ENCODE measurements at regions of chr21 and their contacts with region 1.

Region 1: DNA sequence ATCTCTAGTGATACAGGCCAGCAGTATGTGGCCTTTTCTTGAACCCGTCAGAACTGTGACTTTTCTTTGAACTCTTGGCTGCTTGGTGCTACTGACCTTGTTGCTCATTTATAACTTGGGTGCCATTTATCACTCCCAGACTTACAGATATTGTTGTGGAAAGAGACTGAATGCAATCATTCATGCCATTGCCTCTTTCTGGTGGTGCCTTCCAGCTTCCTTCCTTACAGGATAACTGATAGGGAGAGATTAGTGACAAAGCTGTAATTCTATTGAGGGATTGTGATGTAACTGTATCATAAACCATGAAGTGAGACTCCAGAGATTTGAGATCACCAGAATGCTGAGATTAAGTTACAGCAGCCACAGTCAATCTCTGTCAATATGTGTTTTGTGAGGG is 256.5 kb downstream of the USP25 start:
- DNase-seq: no peak

Region 2: GRCh38 chr21:15953551-15954116 is 32.6 kb before region 1 on chr21:
- intact Hi-C with region 1: loop called in 1 of 2 experiments (anchors 2 kb)
- DNase-seq: no peak

Region 3: GRCh38 chr21:16124378-16125130 is 138.3 kb after region 1 on chr21:
- intact Hi-C with region 1: no loop called
- DNase-seq: no peak

Region 4: GRCh38 chr21:16323596-16323995 is 337.3 kb after region 1 on chr21:
- intact Hi-C with region 1: no loop called
- DNase-seq: no peak